ENCODE measurements at regions of chr10 and their contacts with region 1.

Region 1: GRCh38 chr10:74081192-74081803 is 69.3 kb downstream of the AP3M1 start:
- DNase-seq: peak; percentile 38
- H3K4me3 ChIP-seq: no peak overlapping the region
- H3K27ac ChIP-seq: no peak overlapping the region
- H3K4me1 ChIP-seq: peaks cover 31% of the 10 kb centered on the region
- H3K27me3 ChIP-seq: no peaks in the 10 kb centered on the region
- CTCF ChIP-seq: peak; percentile 75 to 79

Region 2: GRCh38 chr10:73879296-73880173 is 201.8 kb before region 1 on chr10:
- CTCF ChIA-PET with region 1: no interaction called
- dilution Hi-C with region 1: no loop called
- in situ Hi-C with region 1: loop called (anchors 10 to 25 kb)
- intact Hi-C with region 1: no loop called
- DNase-seq: peak; percentile 80
- H3K4me3 ChIP-seq: no peak overlapping the region
- H3K27ac ChIP-seq: no peak overlapping the region
- H3K4me1 ChIP-seq: peaks cover 29% of the 10 kb centered on the region
- H3K27me3 ChIP-seq: no peaks in the 10 kb centered on the region
- CTCF ChIP-seq: peak; percentile 93 to 94

Region 3: DNA sequence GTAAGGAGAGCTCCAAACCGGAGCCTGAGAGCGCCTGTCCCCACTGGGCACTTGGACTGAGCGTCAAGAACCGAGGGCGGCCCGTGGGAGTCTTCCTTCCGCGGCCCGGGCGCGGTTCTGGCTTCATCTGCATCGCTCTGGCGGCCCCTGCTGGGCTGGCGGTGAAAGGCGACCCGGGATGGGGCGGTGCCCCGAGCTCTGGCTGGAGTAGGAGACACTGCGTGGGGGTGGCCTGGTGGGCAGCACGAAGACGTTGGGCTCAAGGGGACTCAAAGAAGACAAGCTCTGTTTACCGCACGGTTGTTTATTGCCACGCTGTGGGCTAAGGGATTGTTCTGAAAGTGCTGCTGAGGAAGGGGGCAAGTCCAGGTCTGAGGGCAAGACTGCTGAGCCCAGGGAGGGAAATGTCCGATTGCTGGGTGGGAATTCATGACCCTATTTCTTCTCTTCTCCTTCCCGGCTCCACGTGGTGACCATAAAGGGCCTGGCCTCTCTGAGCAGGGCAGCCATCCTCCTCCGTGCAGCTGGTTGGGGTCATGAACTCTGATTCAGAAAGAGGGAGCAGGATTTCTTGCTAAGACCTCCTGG is 140.6 kb before region 1 on chr10:
- CTCF ChIA-PET with region 1: no interaction called
- dilution Hi-C with region 1: no loop called
- in situ Hi-C with region 1: no loop called
- intact Hi-C with region 1: loop called (anchors 2 kb)
- DNase-seq: peak; percentile 51
- H3K4me3 ChIP-seq: no peak overlapping the region
- H3K27ac ChIP-seq: peak overlapping the region; percentile 55
- H3K4me1 ChIP-seq: peaks cover 21% of the 10 kb centered on the region
- H3K27me3 ChIP-seq: no peaks in the 10 kb centered on the region
- CTCF ChIP-seq: peak; percentile 68 to 98

Region 4: GRCh38 chr10:73956476-73957359 is 124.6 kb before region 1 on chr10:
- CTCF ChIA-PET with region 1: no interaction called
- dilution Hi-C with region 1: no loop called
- in situ Hi-C with region 1: no loop called
- intact Hi-C with region 1: loop called (anchors 5 kb)
- DNase-seq: peak; percentile 55
- H3K4me3 ChIP-seq: no peak overlapping the region
- H3K27ac ChIP-seq: no peak overlapping the region
- H3K4me1 ChIP-seq: peaks cover 13% of the 10 kb centered on the region
- H3K27me3 ChIP-seq: no peaks in the 10 kb centered on the region
- CTCF ChIP-seq: no peak

Region 5: DNA sequence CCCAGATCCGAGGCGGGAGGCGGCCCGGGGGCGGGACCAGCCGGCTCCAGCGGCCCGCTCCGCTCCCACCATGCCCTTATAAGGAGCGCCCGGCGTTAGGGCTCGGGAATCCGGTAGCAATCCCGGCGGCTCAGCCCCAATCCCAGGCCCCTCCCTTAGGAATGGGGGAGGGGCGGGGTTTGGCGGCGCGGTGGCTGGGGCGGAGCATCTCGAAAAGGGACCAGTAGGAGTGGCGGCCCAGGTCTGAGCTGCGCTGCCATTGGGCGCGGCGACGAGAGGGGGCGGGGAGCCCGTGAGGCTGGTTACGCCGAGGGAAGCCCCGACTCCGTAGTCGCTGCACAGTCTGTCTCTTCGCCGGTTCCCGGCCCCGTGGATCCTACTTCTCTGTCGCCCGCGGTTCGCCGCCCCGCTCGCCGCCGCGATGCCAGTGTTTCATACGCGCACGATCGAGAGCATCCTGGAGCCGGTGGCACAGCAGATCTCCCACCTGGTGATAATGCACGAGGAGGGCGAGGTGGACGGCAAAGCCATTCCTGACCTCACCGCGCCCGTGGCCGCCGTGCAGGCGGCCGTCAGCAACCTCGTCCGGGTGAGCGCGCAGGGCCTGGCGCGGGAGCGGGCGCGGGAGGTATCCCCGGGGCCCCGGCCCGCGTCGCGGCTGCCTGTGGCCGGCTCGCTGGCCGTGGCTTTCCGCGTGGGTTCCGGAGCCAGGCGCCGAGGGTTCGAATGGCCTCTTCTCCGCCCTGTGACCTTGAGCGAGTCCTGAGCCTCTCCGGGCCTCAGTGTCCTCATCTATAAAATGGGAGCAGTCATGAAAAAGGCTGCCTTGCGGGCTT is 83.3 kb before region 1 on chr10 and contains the start of gene VCL:
- CTCF ChIA-PET with region 1: interaction called, 5 read pairs
- dilution Hi-C with region 1: no loop called
- in situ Hi-C with region 1: no loop called
- intact Hi-C with region 1: loop called (anchors 1 kb)
- DNase-seq: peak; percentile 99
- H3K4me3 ChIP-seq: peak within 1 kb of the TSS; percentile 61 to 92 (median 90)
- H3K27ac ChIP-seq: peak within 1 kb of the TSS; percentile 72
- H3K4me1 ChIP-seq: peaks cover 26% of the 10 kb centered on the region
- H3K27me3 ChIP-seq: no peaks in the 10 kb centered on the region
- CTCF ChIP-seq: no peak
- total RNA-seq, gene VCL: 136 to 172 TPM

Region 6: GRCh38 chr10:74021248-74022055 is 59.8 kb before region 1 on chr10:
- CTCF ChIA-PET with region 1: no interaction called
- dilution Hi-C with region 1: no loop called
- in situ Hi-C with region 1: no loop called
- intact Hi-C with region 1: loop called (anchors 5 kb)
- DNase-seq: peak; percentile 77
- H3K4me3 ChIP-seq: no peak overlapping the region
- H3K27ac ChIP-seq: no peak overlapping the region
- H3K4me1 ChIP-seq: peaks cover 20% of the 10 kb centered on the region
- H3K27me3 ChIP-seq: no peaks in the 10 kb centered on the region
- CTCF ChIP-seq: no peak

Region 7: GRCh38 chr10:74051736-74052342 is 29.5 kb before region 1 on chr10:
- CTCF ChIA-PET with region 1: interaction called, 12 read pairs
- dilution Hi-C with region 1: no loop called
- in situ Hi-C with region 1: no loop called
- intact Hi-C with region 1: no loop called
- DNase-seq: no peak
- H3K4me3 ChIP-seq: no peak overlapping the region
- H3K27ac ChIP-seq: no peak overlapping the region
- H3K4me1 ChIP-seq: peaks cover 19% of the 10 kb centered on the region
- H3K27me3 ChIP-seq: no peaks in the 10 kb centered on the region
- CTCF ChIP-seq: no peak

Measured in mammary epithelial cell (primary cell).